Ovary (tissue), 10 donors: ENCODE measurements at regions of chr3 and their contacts with region 1.

Region 1: DNA sequence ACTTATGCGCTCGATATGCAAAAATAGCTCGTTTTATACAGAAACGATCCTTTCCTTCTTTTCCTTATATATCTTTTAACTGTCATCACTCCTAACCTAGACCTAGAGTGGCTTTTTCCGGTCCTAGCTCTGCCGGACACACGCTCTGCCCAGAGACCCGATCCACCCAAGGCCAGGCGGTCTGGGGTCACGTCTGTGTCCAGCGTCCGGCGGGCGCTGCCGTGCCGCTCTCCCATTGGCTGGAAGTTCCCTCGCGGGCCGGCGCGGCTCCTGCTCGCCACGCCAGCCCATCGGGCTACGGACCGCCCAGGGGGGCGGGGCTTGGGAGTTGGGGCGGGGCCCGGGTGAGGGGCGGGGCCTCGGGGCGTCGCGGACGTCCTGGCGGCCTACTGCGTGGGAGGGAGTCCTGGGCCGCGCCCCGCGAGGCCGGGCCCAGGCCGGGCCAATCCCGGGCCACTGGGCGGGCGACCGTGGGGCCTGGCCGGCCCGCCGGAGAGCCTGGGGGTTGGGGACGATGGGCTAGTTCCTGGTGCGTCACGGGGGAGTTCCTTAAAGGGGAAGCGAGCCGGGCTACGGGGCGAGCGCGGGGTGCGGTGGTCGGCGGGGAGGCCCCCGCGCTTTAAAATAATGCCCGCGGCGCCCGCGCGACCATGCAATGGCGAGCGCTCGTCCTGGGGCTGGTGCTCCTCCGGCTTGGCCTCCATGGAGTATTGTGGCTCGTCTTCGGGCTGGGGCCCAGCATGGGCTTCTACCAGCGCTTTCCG is at the start of gene EDEM1:
- DNase-seq: peak; percentile 93 to 99 (median 95)
- H3K4me3 ChIP-seq: peak within 1 kb of the TSS; percentile 98
- H3K27ac ChIP-seq: peak within 1 kb of the TSS; percentile 67 to 92
- H3K4me1 ChIP-seq: peaks cover 6% of the 10 kb centered on the region
- H3K27me3 ChIP-seq: no peaks in the 10 kb centered on the region
- CTCF ChIP-seq: no peak
- EP300 ChIP-seq: no peak
- POLR2A ChIP-seq: peak; percentile 75
- total RNA-seq, gene EDEM1: 19.5 to 43.4 (median 31.5) TPM

Region 2: GRCh38 chr3:5002174-5002870 is 185.0 kb before region 1 on chr3:
- intact Hi-C with region 1: no loop called
- DNase-seq: no peak
- H3K4me3 ChIP-seq: no peak overlapping the region
- H3K27ac ChIP-seq: no peak overlapping the region
- H3K4me1 ChIP-seq: no peaks in the 10 kb centered on the region
- H3K27me3 ChIP-seq: no peaks in the 10 kb centered on the region
- CTCF ChIP-seq: no peak
- EP300 ChIP-seq: no peak
- POLR2A ChIP-seq: no peak

Region 3: DNA sequence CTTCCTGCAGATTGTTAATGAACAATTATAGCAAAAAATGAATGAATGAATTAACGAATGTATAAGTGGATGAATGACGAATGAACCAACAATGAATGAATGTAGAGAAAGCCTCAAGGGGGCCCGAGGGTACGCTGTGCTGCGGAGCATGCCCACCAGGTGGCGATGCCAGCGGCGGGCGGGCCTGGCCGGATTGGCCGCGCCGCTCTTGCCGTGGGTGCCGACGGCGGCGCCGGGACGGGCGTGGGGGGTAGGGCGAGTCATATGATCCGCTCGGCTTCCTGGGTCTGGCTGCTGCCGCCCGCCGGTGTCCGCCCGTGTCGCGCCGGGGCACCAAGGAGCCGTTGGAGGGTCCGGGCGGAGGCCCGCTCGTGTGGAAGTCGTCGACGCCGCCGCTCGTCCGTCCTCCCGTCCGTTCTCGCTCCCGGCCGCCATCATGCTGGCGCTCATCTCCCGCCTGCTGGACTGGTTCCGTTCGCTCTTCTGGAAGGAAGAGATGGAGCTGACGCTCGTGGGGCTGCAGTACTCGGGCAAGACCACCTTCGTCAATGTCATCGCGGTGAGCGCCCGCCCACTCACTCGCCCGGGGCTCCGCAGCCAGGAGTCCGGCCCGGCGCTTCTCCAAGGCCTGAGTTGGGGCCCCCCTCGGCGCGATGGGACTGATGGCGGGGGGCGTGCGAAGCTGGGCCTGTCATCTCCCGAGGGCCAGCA is 65.2 kb before region 1 on chr3 and contains the start of gene ARL8B:
- intact Hi-C with region 1: loop called in 2 of 4 experiments (anchors 5 kb)
- DNase-seq: peak; percentile 84 to 93 (median 90)
- H3K4me3 ChIP-seq: peak within 1 kb of the TSS; percentile 97
- H3K27ac ChIP-seq: peak within 1 kb of the TSS; percentile 62 to 69
- H3K4me1 ChIP-seq: peaks cover 3% of the 10 kb centered on the region
- H3K27me3 ChIP-seq: no peaks in the 10 kb centered on the region
- CTCF ChIP-seq: peak; percentile 91 to 96 (median 94)
- EP300 ChIP-seq: no peak
- POLR2A ChIP-seq: peak; percentile 56
- total RNA-seq, gene ARL8B: 27.1 to 70.6 (median 49.8) TPM

Region 4: GRCh38 chr3:5133646-5134391 is 53.5 kb before region 1 on chr3:
- intact Hi-C with region 1: no loop called
- DNase-seq: peak in 1 of 5 donors; percentile 32
- H3K4me3 ChIP-seq: no peak overlapping the region
- H3K27ac ChIP-seq: no peak overlapping the region
- H3K4me1 ChIP-seq: peaks cover 10% of the 10 kb centered on the region
- H3K27me3 ChIP-seq: no peaks in the 10 kb centered on the region
- CTCF ChIP-seq: no peak
- EP300 ChIP-seq: no peak
- POLR2A ChIP-seq: no peak

Region 5: DNA sequence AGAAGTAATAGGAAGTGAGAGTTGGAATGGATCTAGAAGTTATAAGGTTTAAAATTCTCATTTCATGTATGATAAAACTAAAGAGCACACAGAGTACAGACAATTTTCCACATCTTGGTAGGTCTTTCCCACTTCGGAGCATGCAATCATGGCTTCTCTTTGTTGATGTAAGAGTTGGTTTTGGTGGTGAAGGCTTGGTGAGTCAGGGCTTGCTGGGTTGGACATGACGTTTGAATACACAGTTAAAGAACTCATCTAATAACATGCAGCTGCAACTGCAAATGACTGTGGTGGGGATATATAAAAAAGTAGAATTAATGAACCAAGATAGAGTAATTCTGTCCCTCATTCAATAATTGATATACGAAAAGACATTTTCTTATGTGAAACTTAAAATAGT is 1634.1 kb after region 1 on chr3:
- intact Hi-C with region 1: no loop called
- DNase-seq: no peak
- H3K4me3 ChIP-seq: no peak overlapping the region
- H3K27ac ChIP-seq: no peak overlapping the region
- H3K4me1 ChIP-seq: no peaks in the 10 kb centered on the region
- H3K27me3 ChIP-seq: no peaks in the 10 kb centered on the region
- CTCF ChIP-seq: no peak
- EP300 ChIP-seq: no peak
- POLR2A ChIP-seq: no peak